PC-3 (cell line): ENCODE measurements at regions of chr10 and their contacts with region 1.

Region 1: GRCh38 chr10:59625721-59626522 is 83.7 kb downstream of the SLC16A9 start:
- DNase-seq: peak; percentile 95
- ATAC-seq: peak; percentile 82
- H3K4me3 ChIP-seq: peak overlapping the region; percentile 8; the same call in 1 of the 2 replicates
- H3K27ac ChIP-seq: no peak overlapping the region
- H3K4me1 ChIP-seq: peaks cover 35% of the 10 kb centered on the region
- H3K27me3 ChIP-seq: no peaks in the 10 kb centered on the region
- CTCF ChIP-seq: peak; percentile 99

Region 2: DNA sequence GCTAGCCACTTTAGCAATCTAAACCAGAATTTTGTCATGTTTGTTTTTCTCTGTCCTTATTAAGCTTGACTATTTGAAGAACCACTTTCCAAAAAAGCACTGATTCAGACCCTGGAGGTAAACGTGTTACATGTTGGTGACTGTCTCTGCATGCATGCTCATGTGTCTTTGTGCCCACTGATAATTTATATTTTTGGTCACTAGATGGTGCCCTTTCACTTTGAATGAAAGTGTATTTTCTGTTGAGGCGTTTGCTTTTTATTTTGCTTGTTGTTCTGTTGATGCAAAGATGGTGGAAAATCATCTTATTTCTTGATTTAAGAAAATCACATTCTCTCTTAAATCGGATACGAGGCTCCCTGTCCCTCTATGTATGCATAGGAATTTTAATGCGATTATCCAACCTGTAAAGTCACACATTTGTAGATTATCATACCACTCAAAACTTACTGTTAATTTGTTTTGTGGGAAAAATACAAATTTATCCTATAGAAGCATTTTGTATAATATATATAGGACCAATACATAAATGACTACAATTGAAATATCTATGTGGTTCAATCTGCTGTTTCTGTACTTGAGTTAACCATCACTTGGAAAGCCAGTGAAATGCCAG is 843.9 kb before region 1 on chr10:
- CTCF ChIA-PET with region 1: interaction called, 3 read pairs
- POLR2A ChIA-PET with region 1: no interaction called
- intact Hi-C with region 1: loop called (anchors 1 kb)
- DNase-seq: peak; percentile 93
- ATAC-seq: peak; percentile 69
- H3K4me3 ChIP-seq: no peak overlapping the region
- H3K27ac ChIP-seq: no peak overlapping the region
- H3K4me1 ChIP-seq: peaks cover 20% of the 10 kb centered on the region
- H3K27me3 ChIP-seq: 0 out of 2 replicates have a peak, but pooled peaks cover 1% of the 10 kb centered on the region
- CTCF ChIP-seq: peak; percentile 97

Region 3: GRCh38 chr10:59580026-59580863 is 45.7 kb before region 1 on chr10:
- CTCF ChIA-PET with region 1: interaction called, 4 read pairs
- POLR2A ChIA-PET with region 1: no interaction called
- intact Hi-C with region 1: loop called (anchors 1 kb)
- DNase-seq: peak; percentile 79
- ATAC-seq: peak; percentile 64
- H3K4me3 ChIP-seq: no peak overlapping the region
- H3K27ac ChIP-seq: no peak overlapping the region
- H3K4me1 ChIP-seq: peaks cover 21% of the 10 kb centered on the region
- H3K27me3 ChIP-seq: no peaks in the 10 kb centered on the region
- CTCF ChIP-seq: peak; percentile 94

Region 4: GRCh38 chr10:59702347-59702746 is 76.4 kb after region 1 on chr10:
- CTCF ChIA-PET with region 1: interaction called, 6 read pairs
- POLR2A ChIA-PET with region 1: no interaction called
- intact Hi-C with region 1: loop called (anchors 2 kb)
- DNase-seq: peak; percentile 97
- ATAC-seq: peak; percentile 100
- H3K4me3 ChIP-seq: no peak overlapping the region
- H3K27ac ChIP-seq: peak overlapping the region; percentile 60
- H3K4me1 ChIP-seq: peaks cover 18% of the 10 kb centered on the region
- H3K27me3 ChIP-seq: no peaks in the 10 kb centered on the region
- CTCF ChIP-seq: no peak

Region 5: DNA sequence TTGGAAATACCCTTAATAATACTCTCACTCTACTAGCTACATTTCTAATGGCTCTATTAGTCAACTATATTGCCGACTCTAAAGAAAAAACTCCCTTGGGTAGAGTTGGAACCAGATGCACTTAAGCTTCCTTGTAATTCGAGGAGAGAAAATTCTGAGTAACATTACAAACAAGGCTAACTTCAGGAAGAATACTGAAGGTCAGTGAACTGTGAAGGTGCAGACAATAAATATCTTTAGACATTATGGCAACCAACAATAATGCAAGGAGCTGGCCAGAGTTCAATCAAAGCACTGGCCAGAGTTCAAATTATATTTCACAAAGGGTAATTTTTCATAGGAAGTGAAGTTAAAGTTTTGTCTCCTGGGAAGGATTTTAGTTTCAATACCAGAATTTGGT is 168.0 kb after region 1 on chr10:
- CTCF ChIA-PET with region 1: interaction called, 4 read pairs
- POLR2A ChIA-PET with region 1: no interaction called
- intact Hi-C with region 1: loop called (anchors 1 kb)
- DNase-seq: peak; percentile 92
- ATAC-seq: peak; percentile 97
- H3K4me3 ChIP-seq: peak overlapping the region; percentile 25; the same call in 1 of the 2 replicates
- H3K27ac ChIP-seq: peak overlapping the region; percentile 83
- H3K4me1 ChIP-seq: peaks cover 27% of the 10 kb centered on the region
- H3K27me3 ChIP-seq: no peaks in the 10 kb centered on the region
- CTCF ChIP-seq: no peak

Region 6: GRCh38 chr10:59906417-59907202 is 280.7 kb after region 1 on chr10 and contains the start of gene CCDC6:
- CTCF ChIA-PET with region 1: interaction called, 3 read pairs
- POLR2A ChIA-PET with region 1: no interaction called
- intact Hi-C with region 1: loop called (anchors 1 kb)
- DNase-seq: peak; percentile 98
- ATAC-seq: peak; percentile 77
- H3K4me3 ChIP-seq: peak within 1 kb of the TSS; percentile 93
- H3K27ac ChIP-seq: peak within 1 kb of the TSS; percentile 70
- H3K4me1 ChIP-seq: peaks cover 45% of the 10 kb centered on the region
- H3K27me3 ChIP-seq: no peaks in the 10 kb centered on the region
- CTCF ChIP-seq: peak; percentile 77
- total RNA-seq, gene CCDC6: 37.6 and 46.1 TPM in 2 replicates